ENCODE measurements at regions of chrX and their contacts with region 1.

Region 1: DNA sequence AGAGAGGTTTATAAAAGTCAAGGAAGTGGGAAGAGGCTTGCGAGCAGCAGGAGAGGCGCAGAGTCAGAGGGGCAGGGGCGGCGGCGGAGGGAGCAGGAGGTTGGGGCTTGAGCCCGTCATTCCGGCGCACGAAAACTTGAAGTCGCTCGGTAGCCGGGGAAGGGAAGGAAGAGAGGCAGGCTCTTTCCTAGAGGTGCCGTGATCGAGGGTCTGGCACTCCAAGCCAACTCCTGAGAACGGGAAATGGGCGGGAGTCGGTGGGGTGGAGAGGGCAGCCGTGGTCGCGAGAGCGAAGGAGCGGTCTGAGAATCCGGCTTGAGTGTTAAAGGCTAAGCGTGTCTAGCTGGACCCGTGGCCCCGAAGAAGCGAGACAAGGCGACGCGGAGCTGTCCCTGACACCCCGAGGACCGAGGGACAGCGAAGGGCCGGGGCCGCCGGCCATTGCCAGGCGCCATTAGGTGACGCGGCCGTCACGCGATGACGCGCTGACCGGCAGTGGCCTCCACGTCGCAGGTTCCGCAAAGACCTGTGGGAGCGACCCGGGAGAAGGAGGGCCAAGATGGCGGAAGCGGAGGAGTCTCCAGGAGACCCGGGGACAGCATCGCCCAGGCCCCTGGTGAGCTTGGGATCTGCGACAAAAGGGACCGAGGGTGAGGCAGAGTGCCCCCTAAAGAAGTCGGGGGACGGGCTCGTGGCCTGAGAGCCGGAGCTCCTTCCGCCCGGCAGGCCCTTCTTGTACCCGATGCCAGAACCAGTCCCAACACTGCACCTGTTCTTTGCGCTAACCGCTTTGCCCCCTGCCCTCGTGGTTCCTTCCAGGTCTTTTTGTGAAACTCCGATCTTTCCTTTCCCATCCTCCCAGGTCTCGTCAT is at the start of gene YIPF6:
- DNase-seq: peak; percentile 64
- H3K4me3 Mint-ChIP-seq: peak within 1 kb of the TSS; percentile 90
- H3K27ac Mint-ChIP-seq: peak within 1 kb of the TSS; percentile 96
- H3K4me1 Mint-ChIP-seq: peaks cover 8% of the 10 kb centered on the region
- H3K27me3 Mint-ChIP-seq: no peaks in the 10 kb centered on the region
- total RNA-seq, gene YIPF6: 20.5 and 23.6 TPM in 2 replicates

Region 2: GRCh38 chrX:69165087-69165651 is 666.4 kb after region 1 on chrX and contains the start of gene PJA1:
- intact Hi-C with region 1: loop called (anchors 2 kb)
- DNase-seq: peak; percentile 50
- H3K4me3 Mint-ChIP-seq: peak within 1 kb of the TSS; percentile 92
- H3K27ac Mint-ChIP-seq: peak within 1 kb of the TSS; percentile 94
- H3K4me1 Mint-ChIP-seq: peaks cover 25% of the 10 kb centered on the region
- H3K27me3 Mint-ChIP-seq: peaks cover 7% of the 10 kb centered on the region
- total RNA-seq, gene PJA1: 14.5 and 15.6 TPM in 2 replicates

Region 3: GRCh38 chrX:69314436-69315348 is 815.9 kb after region 1 on chrX:
- intact Hi-C with region 1: no loop called
- DNase-seq: no peak
- H3K4me3 Mint-ChIP-seq: no peak overlapping the region
- H3K27ac Mint-ChIP-seq: no peak overlapping the region
- H3K4me1 Mint-ChIP-seq: no peaks in the 10 kb centered on the region
- H3K27me3 Mint-ChIP-seq: no peaks in the 10 kb centered on the region

Measured in activated T-helper 1 cell treated with anti-CD3 and anti-CD28 coated beads, Interleukin-12 subunit alpha, Interleukin-12 subunit beta, Interleukin-2, Interleukin-4 antibody, amounts not matched to agents 30 ng/mL and 10 ng/mL and 1 ng/mL, durations not matched to agents 14 hours and 24 hours and 36 hours (primary cell).